CD8-positive, alpha-beta memory T cell (primary cell): ENCODE measurements at regions of chr11 and their contacts with region 1.

Region 1: DNA sequence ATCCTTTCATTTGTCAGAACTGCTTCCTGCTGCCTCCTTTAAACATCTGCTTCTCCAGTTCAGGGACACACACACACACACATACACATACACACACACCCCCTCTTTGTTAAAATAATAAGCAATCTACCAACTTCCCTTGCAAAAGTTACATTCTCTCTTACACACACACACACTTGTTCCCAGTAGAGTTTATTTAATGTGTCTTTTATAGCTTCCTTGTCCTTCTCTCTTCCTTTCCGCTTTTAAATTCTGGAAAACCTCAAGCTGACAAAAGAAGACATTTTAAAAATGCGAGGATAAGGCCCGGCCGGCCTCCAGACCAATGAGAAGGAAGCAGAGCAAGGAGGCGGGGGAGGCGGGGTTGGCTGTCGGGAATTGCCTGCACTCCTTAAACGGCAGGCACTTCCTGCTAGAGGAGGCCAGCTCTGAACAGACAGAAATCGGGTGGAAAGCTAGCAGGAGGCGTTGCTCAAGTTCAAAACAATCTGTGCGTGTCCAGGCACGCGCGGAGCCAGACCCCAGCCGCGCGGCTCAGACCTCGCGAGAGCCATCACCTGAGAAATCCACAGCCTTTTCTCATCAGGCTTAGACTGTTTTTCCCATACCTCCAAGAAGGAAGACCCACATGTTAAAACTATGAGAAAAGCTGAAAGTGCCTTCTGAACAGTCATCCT is 99.9 kb downstream of the MAML2 start:
- DNase-seq: peak; percentile 57 to 77 (median 67)
- H3K4me3 ChIP-seq: peak overlapping the region; percentile 40
- H3K4me3 Mint-ChIP-seq: peak overlapping the region; percentile 83 to 97 (median 90)
- H3K27ac ChIP-seq: peak overlapping the region; percentile 68
- H3K27ac Mint-ChIP-seq: peak overlapping the region; percentile 65 to 99 (median 88)
- H3K4me1 ChIP-seq: peaks cover 61% of the 10 kb centered on the region
- H3K4me1 Mint-ChIP-seq: peaks cover 48 to 59% (median 49%) of the 10 kb centered on the region in 3 donors
- H3K27me3 ChIP-seq: no peaks in the 10 kb centered on the region
- H3K27me3 Mint-ChIP-seq: no peaks in the 10 kb centered on the region

Region 2: DNA sequence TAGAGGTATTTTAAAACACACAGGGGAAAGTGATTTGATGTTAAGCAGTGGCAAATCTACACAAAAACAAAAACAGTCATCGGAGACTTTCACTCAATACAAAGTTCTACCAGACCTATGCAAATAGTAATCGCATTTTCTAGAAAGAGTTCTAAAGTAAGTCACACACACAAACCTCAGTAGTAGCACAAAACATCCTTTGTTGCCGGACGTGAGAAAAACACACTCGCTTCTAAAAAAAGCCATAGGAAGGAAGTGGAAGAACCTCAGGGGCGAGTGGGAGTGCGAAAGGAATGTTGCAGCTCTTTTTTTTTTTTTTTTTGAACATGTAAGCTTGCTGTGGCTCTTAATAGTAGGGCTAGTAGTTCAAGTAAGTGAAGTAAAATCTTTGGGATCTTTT is 11.0 kb after region 1 on chr11:
- CTCF ChIA-PET with region 1: interaction called, 11 read pairs
- POLR2A ChIA-PET with region 1: interaction called, 4 read pairs
- DNase-seq: peak in 3 of 5 donors; percentile 44 to 58 (median 47)
- H3K4me3 ChIP-seq: peak overlapping the region; percentile 16
- H3K4me3 Mint-ChIP-seq: peak overlapping the region; percentile 45 to 82 (median 75)
- H3K27ac ChIP-seq: no peak overlapping the region
- H3K27ac Mint-ChIP-seq: peak overlapping the region; percentile 27 to 95 (median 72)
- H3K4me1 ChIP-seq: peaks cover 79% of the 10 kb centered on the region
- H3K4me1 Mint-ChIP-seq: peaks cover 86 to 94% (median 90%) of the 10 kb centered on the region in 3 donors
- H3K27me3 ChIP-seq: no peaks in the 10 kb centered on the region
- H3K27me3 Mint-ChIP-seq: no peaks in the 10 kb centered on the region

Region 3: DNA sequence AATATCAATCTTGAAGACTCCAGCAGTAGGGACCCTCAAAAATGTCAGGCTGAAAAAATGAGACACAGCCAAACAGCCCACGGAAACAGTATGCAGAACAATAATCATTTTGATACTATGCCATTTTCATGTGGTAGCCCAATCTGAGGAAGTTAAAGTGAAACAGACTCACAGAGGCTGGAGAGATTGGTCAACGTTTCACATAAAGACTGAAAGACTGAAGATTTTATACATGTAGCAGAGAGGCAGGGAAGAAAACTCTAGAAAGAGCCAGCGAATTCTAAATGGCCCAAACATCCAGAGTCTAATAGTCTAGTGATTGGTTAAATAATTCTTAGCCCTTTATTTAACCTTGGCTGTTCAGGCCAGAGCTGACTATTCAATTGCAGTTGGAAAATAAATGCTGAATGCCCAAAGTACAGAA is 50.5 kb after region 1 on chr11:
- CTCF ChIA-PET with region 1: no interaction called
- POLR2A ChIA-PET with region 1: no interaction called
- DNase-seq: no peak
- H3K4me3 ChIP-seq: no peak overlapping the region
- H3K4me3 Mint-ChIP-seq: peak overlapping the region in 6 of 7 donors; percentile 5 to 56 (median 47)
- H3K27ac ChIP-seq: no peak overlapping the region
- H3K27ac Mint-ChIP-seq: peak overlapping the region in 6 of 8 donors; percentile 8 to 88 (median 46)
- H3K4me1 ChIP-seq: peaks cover 59% of the 10 kb centered on the region
- H3K4me1 Mint-ChIP-seq: peaks cover 53 to 83% (median 80%) of the 10 kb centered on the region in 3 donors
- H3K27me3 ChIP-seq: no peaks in the 10 kb centered on the region
- H3K27me3 Mint-ChIP-seq: no peaks in the 10 kb centered on the region